Ascending aorta (tissue), 2 donors: ENCODE measurements at regions of chr16 and their contacts with region 1.

Region 1: GRCh38 chr16:80433623-80434022 is 107.2 kb upstream of the DYNLRB2 start:
- DNase-seq: no peak
- H3K4me3 ChIP-seq: no peak overlapping the region
- H3K27ac ChIP-seq: no peak overlapping the region
- H3K4me1 ChIP-seq: no peaks in the 10 kb centered on the region
- H3K27me3 ChIP-seq: no peaks in the 10 kb centered on the region
- CTCF ChIP-seq: no peak

Region 2: DNA sequence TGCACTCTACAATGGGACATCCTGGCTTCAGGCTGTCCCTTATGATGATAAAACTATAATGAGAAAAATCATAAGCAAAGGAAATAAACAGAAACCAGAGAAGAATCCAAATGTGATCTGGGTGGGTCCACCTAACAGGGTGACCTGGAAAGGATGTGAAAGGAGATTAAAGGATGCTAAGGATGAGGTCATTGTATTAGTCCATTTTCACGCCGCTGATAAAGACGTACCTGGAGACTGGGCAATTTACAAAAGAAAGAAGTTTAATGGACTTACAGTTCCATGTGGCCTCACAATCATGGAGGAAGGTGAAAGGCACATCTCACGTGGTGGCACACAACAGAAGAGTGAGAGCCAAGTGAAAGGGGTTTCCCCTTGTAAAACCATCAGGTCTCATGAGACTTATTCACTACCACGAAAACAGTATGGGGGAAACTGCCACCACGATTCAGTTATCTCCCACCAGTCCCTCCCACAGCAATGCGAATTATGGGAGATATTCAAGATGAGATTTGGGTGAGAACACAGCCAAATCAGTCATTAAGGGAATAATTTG is 66.4 kb after region 1 on chr16:
- intact Hi-C with region 1: loop called (anchors 10 kb)
- DNase-seq: no peak
- H3K4me3 ChIP-seq: no peak overlapping the region
- H3K27ac ChIP-seq: no peak overlapping the region
- H3K4me1 ChIP-seq: no peaks in the 10 kb centered on the region
- H3K27me3 ChIP-seq: no peaks in the 10 kb centered on the region
- CTCF ChIP-seq: no peak

Region 3: GRCh38 chr16:80627108-80627507 is 193.5 kb after region 1 on chr16:
- intact Hi-C with region 1: no loop called
- DNase-seq: no peak
- H3K4me3 ChIP-seq: no peak overlapping the region
- H3K27ac ChIP-seq: no peak overlapping the region
- H3K4me1 ChIP-seq: no peaks in the 10 kb centered on the region
- H3K27me3 ChIP-seq: no peaks in the 10 kb centered on the region
- CTCF ChIP-seq: no peak

Region 4: GRCh38 chr16:80639641-80640040 is 206.0 kb after region 1 on chr16:
- intact Hi-C with region 1: no loop called
- DNase-seq: no peak
- H3K4me3 ChIP-seq: no peak overlapping the region
- H3K27ac ChIP-seq: no peak overlapping the region
- H3K4me1 ChIP-seq: no peaks in the 10 kb centered on the region
- H3K27me3 ChIP-seq: no peaks in the 10 kb centered on the region
- CTCF ChIP-seq: no peak